Psoas muscle (tissue), 8 donors: ENCODE measurements at regions of chr1 and their contacts with region 1.

Region 1: GRCh38 chr1:169699711-169700110 is 11.7 kb downstream of the SELL start:
- DNase-seq: no peak
- ATAC-seq: no peak
- H3K4me3 ChIP-seq: no peak overlapping the region
- H3K27ac ChIP-seq: no peak overlapping the region
- H3K4me1 ChIP-seq: no peaks in the 10 kb centered on the region
- H3K27me3 ChIP-seq: peaks cover 0 to 3% (median 0%) of the 10 kb centered on the region in 3 donors
- CTCF ChIP-seq: no peak

Region 2: DNA sequence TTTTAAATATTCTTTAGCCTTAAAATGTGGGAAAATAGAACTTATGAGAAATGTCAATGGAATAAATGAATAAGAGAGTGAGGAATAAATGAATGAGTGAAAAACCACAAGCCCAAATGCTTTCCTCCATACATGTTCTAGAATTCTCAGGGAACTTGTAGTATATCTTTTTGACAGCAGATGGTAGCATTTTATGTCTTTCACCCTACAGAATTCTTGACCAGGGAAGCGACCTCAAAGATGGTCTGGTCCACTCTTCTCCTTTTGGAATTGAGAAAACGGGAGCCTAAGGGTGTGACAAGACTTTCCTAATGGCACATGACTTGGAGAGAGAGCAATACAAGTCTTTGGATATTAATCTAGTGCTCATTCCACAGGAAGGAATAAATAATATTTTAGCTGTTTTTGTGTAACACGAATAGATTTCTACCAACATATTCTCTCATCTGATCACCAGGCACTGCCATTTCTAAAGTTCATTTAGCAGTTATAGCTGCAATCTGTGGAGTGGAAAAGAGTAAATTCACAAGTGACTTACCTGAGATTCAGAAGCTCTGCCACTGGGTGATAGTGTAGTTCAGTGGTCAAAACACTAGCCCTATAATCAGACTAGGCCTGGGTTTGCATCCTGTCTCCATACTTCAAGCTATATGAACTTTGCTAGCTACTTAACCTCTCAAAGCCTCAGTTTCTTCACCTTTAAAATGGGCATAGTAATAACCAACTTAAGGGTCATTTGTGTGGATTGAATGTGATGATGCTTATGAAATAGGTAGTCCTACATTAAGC is 98.4 kb before region 1 on chr1:
- intact Hi-C with region 1: loop called in 1 of 2 experiments (anchors 5 kb)
- DNase-seq: no peak
- ATAC-seq: no peak
- H3K4me3 ChIP-seq: no peak overlapping the region
- H3K27ac ChIP-seq: no peak overlapping the region
- H3K4me1 ChIP-seq: no peaks in the 10 kb centered on the region
- H3K27me3 ChIP-seq: peaks cover 0 to 5% (median 0%) of the 10 kb centered on the region in 3 donors
- CTCF ChIP-seq: peak; percentile 25